Heart right ventricle (tissue), 16 donors: ENCODE measurements at regions of chr4 and their contacts with region 1.

Region 1: DNA sequence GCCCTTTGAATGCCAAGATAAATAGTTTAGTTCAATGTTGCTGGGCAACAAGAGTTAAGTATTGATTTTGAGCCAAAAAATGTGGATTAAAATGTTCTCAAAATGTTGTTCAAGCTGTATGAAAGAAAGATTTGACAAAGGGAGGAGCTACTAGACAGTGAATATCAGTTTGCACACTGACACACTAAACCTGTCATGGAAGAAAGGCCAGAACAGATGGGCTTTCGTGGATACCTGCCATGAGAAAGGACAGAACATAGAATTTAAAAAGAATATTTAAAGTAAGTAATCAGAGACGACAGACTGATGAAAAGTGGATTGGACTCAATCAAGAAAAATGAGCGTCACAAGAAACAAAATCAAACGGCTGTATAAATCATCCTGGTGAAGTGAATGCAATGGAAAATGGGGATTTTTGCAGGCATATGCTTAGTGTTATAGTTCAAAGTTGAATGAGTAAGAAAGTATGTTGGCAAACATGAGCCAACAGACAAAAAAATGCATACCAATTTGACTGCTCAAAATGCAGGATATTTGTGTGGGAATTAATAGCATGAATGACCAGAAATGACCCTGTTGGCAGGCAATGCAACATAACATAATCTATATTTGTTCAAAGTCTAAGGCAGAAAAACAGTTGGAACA is 7.4 kb downstream of the PCDH18 start:
- DNase-seq: no peak
- ATAC-seq: no peak
- H3K4me3 ChIP-seq: peak overlapping the region in 1 of 10 donors; percentile 10
- H3K27ac ChIP-seq: no peak overlapping the region
- H3K4me1 ChIP-seq: peaks cover 0 to 31% (median 3%) of the 10 kb centered on the region in 9 donors
- H3K27me3 ChIP-seq: no peaks in the 10 kb centered on the region
- CTCF ChIP-seq: no peak

Region 2: DNA sequence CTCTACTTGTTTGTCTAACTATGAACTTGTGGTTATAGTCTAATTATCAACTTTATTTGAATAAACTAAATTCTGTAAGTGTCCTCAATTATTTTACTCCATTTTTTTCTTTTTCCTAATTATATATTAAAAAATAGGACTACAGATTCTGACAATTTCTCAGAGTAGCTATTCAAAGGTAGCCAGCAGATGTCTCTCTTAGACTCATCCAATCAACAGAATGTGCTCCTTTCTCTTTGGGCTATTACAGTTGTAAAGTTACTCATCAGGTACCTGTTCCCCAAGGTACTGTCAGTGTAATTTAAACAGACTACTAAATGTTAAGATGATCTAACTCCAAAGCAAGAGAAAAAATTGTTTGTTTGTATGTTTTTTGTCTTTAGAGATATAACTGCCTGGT is 241.1 kb before region 1 on chr4:
- intact Hi-C with region 1: loop called in 1 of 10 experiments (anchors 10 kb)
- DNase-seq: no peak
- ATAC-seq: no peak
- H3K4me3 ChIP-seq: no peak overlapping the region
- H3K27ac ChIP-seq: no peak overlapping the region
- H3K4me1 ChIP-seq: no peaks in the 10 kb centered on the region
- H3K27me3 ChIP-seq: no peaks in the 10 kb centered on the region
- CTCF ChIP-seq: peak in 7 of 9 donors; percentile 10 to 54 (median 36)

Region 3: DNA sequence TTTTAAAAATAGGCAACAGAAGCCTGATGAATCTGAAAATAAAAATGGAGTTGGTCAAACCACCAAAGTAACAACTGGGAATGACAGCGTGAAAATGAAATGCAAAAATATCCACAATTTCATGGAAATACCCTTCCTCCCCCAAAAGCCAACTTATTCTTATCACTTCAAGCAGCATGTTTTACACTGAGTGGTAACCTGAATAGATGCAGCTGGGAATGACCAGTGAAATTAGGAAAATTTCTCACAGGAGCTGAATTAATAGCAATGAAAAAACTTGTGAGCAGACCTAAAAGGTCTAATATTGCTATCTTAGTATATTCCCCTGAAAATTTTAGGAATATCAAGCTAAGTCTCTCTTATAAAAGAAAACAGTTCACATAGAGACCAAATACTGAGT is 231.6 kb before region 1 on chr4:
- intact Hi-C with region 1: loop called in 2 of 10 experiments (anchors 10 kb)
- DNase-seq: no peak
- ATAC-seq: no peak
- H3K4me3 ChIP-seq: peak overlapping the region in 1 of 10 donors; percentile 7
- H3K27ac ChIP-seq: peak overlapping the region in 1 of 10 donors; percentile 0
- H3K4me1 ChIP-seq: peaks cover 0 to 9% (median 0%) of the 10 kb centered on the region in 9 donors
- H3K27me3 ChIP-seq: no peaks in the 10 kb centered on the region
- CTCF ChIP-seq: no peak

Region 4: DNA sequence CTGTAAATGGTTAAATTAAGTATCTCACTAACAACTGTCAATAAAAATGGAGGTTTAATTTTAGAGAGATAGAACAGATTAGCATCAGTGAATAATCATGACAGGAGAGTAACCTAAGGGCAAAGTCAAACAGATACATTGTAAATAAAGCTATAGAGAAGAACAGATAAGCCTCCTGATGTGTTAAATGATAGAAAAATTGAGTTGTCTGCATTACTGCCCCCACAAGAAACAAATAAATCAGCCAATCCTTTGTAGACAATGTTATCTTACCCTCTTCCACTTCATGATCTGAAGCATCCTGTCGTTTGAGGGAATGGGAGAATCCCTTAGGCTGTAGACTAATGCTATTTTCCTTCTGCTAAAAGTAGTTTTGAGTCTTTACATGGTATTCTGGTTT is 140.4 kb before region 1 on chr4:
- intact Hi-C with region 1: no loop called
- DNase-seq: no peak
- ATAC-seq: no peak
- H3K4me3 ChIP-seq: no peak overlapping the region
- H3K27ac ChIP-seq: no peak overlapping the region
- H3K4me1 ChIP-seq: no peaks in the 10 kb centered on the region
- H3K27me3 ChIP-seq: no peaks in the 10 kb centered on the region
- CTCF ChIP-seq: no peak